Calu3 (cell line): ENCODE measurements at regions of chr6 and their contacts with region 1.

Region 1: GRCh38 chr6:30326526-30327260 is at the start of gene TRIM39:
- DNase-seq: peak; percentile 89
- H3K4me3 Mint-ChIP-seq: peak within 1 kb of the TSS; percentile 100
- H3K27ac Mint-ChIP-seq: peak within 1 kb of the TSS; percentile 100
- H3K4me1 Mint-ChIP-seq: peaks cover 48% of the 10 kb centered on the region
- H3K27me3 Mint-ChIP-seq: no peaks in the 10 kb centered on the region
- CTCF ChIP-seq: no peak
- total RNA-seq, gene TRIM39: 22.0 and 22.3 TPM in 2 replicates

Region 2: GRCh38 chr6:30212865-30213666 is 113.6 kb before region 1 on chr6 and contains the start of gene TRIM26:
- CTCF ChIA-PET with region 1: interaction called, 9 read pairs
- intact Hi-C with region 1: loop called (anchors 5 kb)
- DNase-seq: peak; percentile 99
- H3K4me3 Mint-ChIP-seq: peak within 1 kb of the TSS; percentile 99
- H3K27ac Mint-ChIP-seq: peak within 1 kb of the TSS; percentile 94
- H3K4me1 Mint-ChIP-seq: peaks cover 48% of the 10 kb centered on the region
- H3K27me3 Mint-ChIP-seq: no peaks in the 10 kb centered on the region
- CTCF ChIP-seq: no peak
- total RNA-seq, gene TRIM26: 89.9 and 118 TPM in 2 replicates

Region 3: DNA sequence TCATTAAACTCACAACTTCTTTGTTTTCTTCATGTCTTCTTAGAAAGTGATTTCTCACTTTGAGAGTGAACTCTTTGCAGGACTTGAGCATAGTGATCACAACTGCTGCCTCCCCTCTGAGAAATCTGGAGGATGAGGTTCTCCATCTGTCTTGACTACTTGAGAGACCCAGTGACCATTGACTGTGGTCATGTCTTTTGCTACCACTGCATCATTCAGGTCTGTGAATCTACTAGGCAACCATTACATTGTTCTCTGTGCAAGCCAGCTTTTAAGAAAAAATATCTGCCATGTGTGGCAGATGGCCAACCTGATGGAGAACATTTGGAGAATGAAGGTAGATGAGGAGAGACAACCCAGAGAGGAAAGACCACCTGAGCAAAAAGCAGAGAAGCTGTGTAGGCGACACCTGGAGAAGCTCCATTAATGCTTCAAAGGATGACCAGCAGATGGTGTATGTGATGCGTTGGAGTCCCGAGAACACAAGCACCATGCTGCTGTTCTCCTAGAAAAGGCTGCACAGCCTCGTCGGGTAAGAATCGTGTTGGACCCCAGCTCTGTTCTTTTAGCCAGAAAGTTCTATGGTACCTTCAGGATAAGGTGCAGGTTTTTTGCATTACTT is 88.4 kb before region 1 on chr6:
- CTCF ChIA-PET with region 1: interaction called, 4 read pairs
- intact Hi-C with region 1: loop called (anchors 10 kb)
- DNase-seq: peak; percentile 49
- H3K4me3 Mint-ChIP-seq: no peak overlapping the region
- H3K27ac Mint-ChIP-seq: no peak overlapping the region
- H3K4me1 Mint-ChIP-seq: no peaks in the 10 kb centered on the region
- H3K27me3 Mint-ChIP-seq: peaks cover 87% of the 10 kb centered on the region
- CTCF ChIP-seq: peak; percentile 29